Transverse colon (tissue), 4 donors: ENCODE measurements at regions of chr7 and their contacts with region 1.

Region 1: DNA sequence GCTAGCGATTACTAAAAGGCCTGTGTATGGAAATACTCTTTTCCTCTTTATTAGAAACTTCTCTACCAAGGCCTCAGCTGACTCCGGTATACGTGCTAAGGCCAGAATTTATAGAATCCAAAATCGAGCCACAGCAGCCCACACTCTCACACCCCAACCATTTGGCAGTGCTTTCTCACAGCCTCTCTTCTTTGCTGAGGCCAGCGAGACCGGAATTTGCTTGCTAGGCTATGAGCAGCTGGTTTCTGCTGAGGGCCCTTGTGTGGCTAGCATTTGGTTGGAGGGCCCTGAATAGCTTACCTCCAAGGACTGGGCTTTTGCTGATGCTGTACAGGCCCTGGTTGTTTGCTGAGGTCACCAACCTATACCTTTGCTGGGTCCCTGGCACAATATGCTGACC is 46.1 kb downstream of the ITGB8 start:
- DNase-seq: no peak
- H3K4me3 ChIP-seq: no peak overlapping the region
- H3K27ac ChIP-seq: no peak overlapping the region
- H3K4me1 ChIP-seq: no peaks in the 10 kb centered on the region
- H3K27me3 ChIP-seq: no peaks in the 10 kb centered on the region
- CTCF ChIP-seq: no peak
- EP300 ChIP-seq: no peak
- POLR2A ChIP-seq: no peak

Region 2: DNA sequence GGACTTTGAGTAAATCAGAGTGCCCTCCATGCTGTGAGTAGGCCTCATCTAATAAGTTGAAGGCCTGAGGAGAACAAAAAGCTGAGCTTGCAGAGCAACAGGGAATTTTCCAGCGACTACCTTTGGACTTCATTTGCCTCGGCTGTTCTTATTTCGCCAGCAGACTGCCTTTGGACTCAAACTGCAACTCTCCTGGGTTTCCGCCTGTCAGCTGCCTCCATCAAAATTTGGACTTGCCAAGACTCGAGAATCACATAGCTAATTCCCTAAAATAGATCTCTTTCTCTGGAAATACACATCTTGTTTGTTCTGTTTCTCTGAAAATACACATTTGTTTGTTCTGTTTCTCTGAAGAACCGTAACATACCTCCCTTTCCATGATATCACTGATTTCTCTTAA is 47.7 kb after region 1 on chr7:
- in situ Hi-C with region 1: no loop called
- intact Hi-C with region 1: no loop called
- DNase-seq: no peak
- H3K4me3 ChIP-seq: no peak overlapping the region
- H3K27ac ChIP-seq: no peak overlapping the region
- H3K4me1 ChIP-seq: no peaks in the 10 kb centered on the region
- H3K27me3 ChIP-seq: no peaks in the 10 kb centered on the region
- CTCF ChIP-seq: no peak
- EP300 ChIP-seq: no peak
- POLR2A ChIP-seq: no peak

Region 3: DNA sequence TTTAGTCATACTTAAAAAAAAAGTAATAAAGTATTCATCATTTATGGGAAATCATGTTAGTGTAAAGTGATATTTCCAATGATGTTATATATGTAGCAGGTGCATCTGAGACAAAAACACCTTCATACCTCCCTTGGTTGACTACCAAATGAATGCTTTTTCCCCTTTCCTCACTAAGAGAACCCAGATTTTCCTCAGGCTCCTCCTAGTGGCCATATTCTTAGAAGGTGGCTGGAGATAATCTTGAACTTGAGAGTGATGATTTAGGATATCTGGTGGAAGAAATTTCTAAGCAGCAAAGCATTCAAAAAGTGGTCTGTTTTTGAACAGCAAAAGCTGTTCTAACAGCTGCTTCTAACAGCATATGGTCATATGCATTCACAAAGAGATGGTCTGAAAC is 1149.2 kb after region 1 on chr7:
- in situ Hi-C with region 1: no loop called
- intact Hi-C with region 1: loop called (anchors 5 kb)
- DNase-seq: no peak
- H3K4me3 ChIP-seq: no peak overlapping the region
- H3K27ac ChIP-seq: no peak overlapping the region
- H3K4me1 ChIP-seq: no peaks in the 10 kb centered on the region
- H3K27me3 ChIP-seq: no peaks in the 10 kb centered on the region
- CTCF ChIP-seq: peak; percentile 20 to 37 (median 29)
- EP300 ChIP-seq: no peak
- POLR2A ChIP-seq: no peak